CD4-positive, alpha-beta memory T cell (primary cell): ENCODE measurements at regions of chr3 and their contacts with region 1.

Region 1: GRCh38 chr3:42600111-42600988 is at the start of gene NKTR:
- DNase-seq: peak; percentile 99 to 100 (median 100)
- H3K4me3 ChIP-seq: peak within 1 kb of the TSS; percentile 76 to 88
- H3K4me3 Mint-ChIP-seq: peak within 1 kb of the TSS; percentile 91 to 97 (median 94)
- H3K27ac ChIP-seq: peak within 1 kb of the TSS; percentile 85
- H3K27ac Mint-ChIP-seq: peak within 1 kb of the TSS; percentile 94 to 99 (median 98)
- H3K4me1 ChIP-seq: peaks cover 39% of the 10 kb centered on the region
- H3K4me1 Mint-ChIP-seq: peaks cover 27 to 49% (median 36%) of the 10 kb centered on the region in 4 donors
- H3K27me3 ChIP-seq: no peaks in the 10 kb centered on the region
- H3K27me3 Mint-ChIP-seq: no peaks in the 10 kb centered on the region
- total RNA-seq, gene NKTR: 256 to 269 TPM

Region 2: GRCh38 chr3:42443819-42444436 is 156.4 kb before region 1 on chr3:
- CTCF ChIA-PET with region 1: no interaction called
- POLR2A ChIA-PET with region 1: no interaction called
- intact Hi-C with region 1: no loop called
- DNase-seq: peak; percentile 47 to 63 (median 59)
- H3K4me3 ChIP-seq: no peak overlapping the region
- H3K4me3 Mint-ChIP-seq: no peak overlapping the region
- H3K27ac ChIP-seq: no peak overlapping the region
- H3K27ac Mint-ChIP-seq: no peak overlapping the region
- H3K4me1 ChIP-seq: no peaks in the 10 kb centered on the region
- H3K4me1 Mint-ChIP-seq: no peaks in the 10 kb centered on the region
- H3K27me3 ChIP-seq: no peaks in the 10 kb centered on the region
- H3K27me3 Mint-ChIP-seq: peaks cover 4 to 18% of the 10 kb centered on the region in 2 donors

Region 3: DNA sequence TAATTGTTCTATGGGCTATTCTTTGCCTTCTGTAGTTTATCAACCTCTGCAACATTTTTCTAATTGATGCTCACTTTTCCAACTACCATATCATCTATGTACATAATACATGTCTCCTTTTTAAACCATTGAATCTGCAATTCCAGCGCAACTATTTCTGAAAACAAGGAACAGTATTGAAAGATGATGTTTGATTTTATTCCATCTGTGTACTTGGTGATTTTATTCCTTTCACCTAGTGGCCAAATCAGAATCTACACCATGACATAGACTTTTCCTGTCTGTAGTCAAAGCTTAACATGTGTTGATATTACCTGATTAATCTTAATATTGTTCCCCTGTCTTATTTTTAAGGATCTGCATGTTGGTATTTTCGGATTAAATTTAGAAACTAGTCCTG is 13.1 kb after region 1 on chr3:
- CTCF ChIA-PET with region 1: interaction called, 20 read pairs
- POLR2A ChIA-PET with region 1: interaction called, 20 read pairs
- intact Hi-C with region 1: loop called (anchors 1 kb)
- DNase-seq: no peak
- H3K4me3 ChIP-seq: no peak overlapping the region
- H3K4me3 Mint-ChIP-seq: peak overlapping the region in 4 of 8 donors; percentile 0 to 14 (median 2)
- H3K27ac ChIP-seq: no peak overlapping the region
- H3K27ac Mint-ChIP-seq: peak overlapping the region in 6 of 7 donors; percentile 0 to 93 (median 46)
- H3K4me1 ChIP-seq: peaks cover 54% of the 10 kb centered on the region
- H3K4me1 Mint-ChIP-seq: peaks cover 39 to 73% (median 54%) of the 10 kb centered on the region in 4 donors
- H3K27me3 ChIP-seq: no peaks in the 10 kb centered on the region
- H3K27me3 Mint-ChIP-seq: no peaks in the 10 kb centered on the region

Region 4: DNA sequence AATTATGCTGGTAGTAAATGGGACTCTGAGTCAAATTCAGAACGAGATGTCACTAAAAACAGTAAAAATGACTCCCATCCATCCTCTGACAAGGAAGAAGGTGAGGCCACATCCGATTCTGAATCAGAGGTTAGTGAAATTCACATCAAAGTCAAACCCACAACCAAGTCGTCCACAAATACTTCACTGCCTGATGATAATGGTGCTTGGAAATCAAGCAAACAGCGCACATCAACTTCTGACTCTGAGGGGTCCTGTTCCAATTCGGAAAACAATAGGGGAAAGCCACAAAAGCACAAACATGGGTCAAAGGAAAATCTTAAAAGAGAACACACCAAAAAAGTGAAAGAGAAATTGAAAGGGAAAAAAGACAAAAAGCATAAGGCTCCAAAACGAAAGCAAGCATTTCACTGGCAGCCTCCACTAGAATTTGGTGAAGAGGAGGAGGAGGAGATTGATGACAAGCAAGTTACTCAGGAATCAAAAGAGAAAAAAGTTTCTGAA is 38.0 kb after region 1 on chr3:
- CTCF ChIA-PET with region 1: interaction called, 3 read pairs
- POLR2A ChIA-PET with region 1: interaction called, 29 read pairs
- intact Hi-C with region 1: loop called (anchors 1 kb)
- DNase-seq: peak; percentile 65 to 78 (median 71)
- H3K4me3 ChIP-seq: peak overlapping the region in 1 of 2 donors; percentile 21
- H3K4me3 Mint-ChIP-seq: no peak overlapping the region
- H3K27ac ChIP-seq: peak overlapping the region; percentile 70
- H3K27ac Mint-ChIP-seq: no peak overlapping the region
- H3K4me1 ChIP-seq: peaks cover 43% of the 10 kb centered on the region
- H3K4me1 Mint-ChIP-seq: peaks cover 11 to 23% (median 13%) of the 10 kb centered on the region in 4 donors
- H3K27me3 ChIP-seq: no peaks in the 10 kb centered on the region
- H3K27me3 Mint-ChIP-seq: no peaks in the 10 kb centered on the region

Region 5: GRCh38 chr3:42652611-42653302 is 52.4 kb after region 1 on chr3:
- CTCF ChIA-PET with region 1: no interaction called
- POLR2A ChIA-PET with region 1: interaction called, 12 read pairs
- intact Hi-C with region 1: no loop called
- DNase-seq: no peak
- H3K4me3 ChIP-seq: no peak overlapping the region
- H3K4me3 Mint-ChIP-seq: peak overlapping the region; percentile 62 to 95 (median 86)
- H3K27ac ChIP-seq: no peak overlapping the region
- H3K27ac Mint-ChIP-seq: peak overlapping the region in 6 of 7 donors; percentile 11 to 79 (median 30)
- H3K4me1 ChIP-seq: peaks cover 28% of the 10 kb centered on the region
- H3K4me1 Mint-ChIP-seq: peaks cover 6 to 29% (median 20%) of the 10 kb centered on the region in 4 donors
- H3K27me3 ChIP-seq: no peaks in the 10 kb centered on the region
- H3K27me3 Mint-ChIP-seq: no peaks in the 10 kb centered on the region

Region 6: GRCh38 chr3:42780892-42781700 is 180.7 kb after region 1 on chr3:
- CTCF ChIA-PET with region 1: no interaction called
- POLR2A ChIA-PET with region 1: no interaction called
- intact Hi-C with region 1: no loop called
- DNase-seq: peak in 4 of 5 donors; percentile 59 to 64 (median 61)
- H3K4me3 ChIP-seq: no peak overlapping the region
- H3K4me3 Mint-ChIP-seq: no peak overlapping the region
- H3K27ac ChIP-seq: no peak overlapping the region
- H3K27ac Mint-ChIP-seq: peak overlapping the region in 1 of 7 donors; percentile 43
- H3K4me1 ChIP-seq: no peaks in the 10 kb centered on the region
- H3K4me1 Mint-ChIP-seq: peaks cover 0 to 3% (median 2%) of the 10 kb centered on the region in 4 donors
- H3K27me3 ChIP-seq: no peaks in the 10 kb centered on the region
- H3K27me3 Mint-ChIP-seq: no peaks in the 10 kb centered on the region